Activated CD8-positive, alpha-beta T cell treated with anti-CD3 and anti-CD28 coated beads for 36 hours (primary cell): ENCODE measurements at regions of chr19 and their contacts with region 1.

Region 1: GRCh38 chr19:2438178-2438864 is 10.9 kb upstream of the TIMM13 start:
- DNase-seq: no peak
- ATAC-seq: no peak
- H3K4me3 Mint-ChIP-seq: no peak overlapping the region
- H3K27ac Mint-ChIP-seq: no peak overlapping the region
- H3K4me1 Mint-ChIP-seq: no peaks in the 10 kb centered on the region
- H3K27me3 Mint-ChIP-seq: no peaks in the 10 kb centered on the region
- CTCF ChIP-seq: no peak

Region 2: GRCh38 chr19:2455851-2456570 is 17.7 kb after region 1 on chr19:
- CTCF ChIA-PET with region 1: no interaction called
- POLR2A ChIA-PET with region 1: interaction called, 10 read pairs
- intact Hi-C with region 1: no loop called
- DNase-seq: peak; percentile 69
- ATAC-seq: peak; percentile 50
- H3K4me3 Mint-ChIP-seq: peak overlapping the region; percentile 82
- H3K27ac Mint-ChIP-seq: peak overlapping the region; percentile 91
- H3K4me1 Mint-ChIP-seq: peaks cover 25% of the 10 kb centered on the region
- H3K27me3 Mint-ChIP-seq: no peaks in the 10 kb centered on the region
- CTCF ChIP-seq: no peak

Region 3: GRCh38 chr19:2475702-2476450 is 37.6 kb after region 1 on chr19 and contains the start of gene GADD45B:
- CTCF ChIA-PET with region 1: no interaction called
- POLR2A ChIA-PET with region 1: no interaction called
- intact Hi-C with region 1: no loop called
- DNase-seq: peak; percentile 97
- ATAC-seq: peak; percentile 46
- H3K4me3 Mint-ChIP-seq: peak within 1 kb of the TSS; percentile 99
- H3K27ac Mint-ChIP-seq: peak within 1 kb of the TSS; percentile 90
- H3K4me1 Mint-ChIP-seq: peaks cover 19% of the 10 kb centered on the region
- H3K27me3 Mint-ChIP-seq: no peaks in the 10 kb centered on the region
- CTCF ChIP-seq: no peak
- total RNA-seq, gene GADD45B: 98.3 to 102 TPM

Region 4: GRCh38 chr19:2561895-2562294 is 123.6 kb after region 1 on chr19:
- CTCF ChIA-PET with region 1: no interaction called
- POLR2A ChIA-PET with region 1: no interaction called
- intact Hi-C with region 1: no loop called
- DNase-seq: peak; percentile 97
- ATAC-seq: peak; percentile 95
- H3K4me3 Mint-ChIP-seq: peak overlapping the region; percentile 74
- H3K27ac Mint-ChIP-seq: peak overlapping the region; percentile 86
- H3K4me1 Mint-ChIP-seq: peaks cover 27% of the 10 kb centered on the region
- H3K27me3 Mint-ChIP-seq: no peaks in the 10 kb centered on the region
- CTCF ChIP-seq: no peak